HepG2 (cell line): ENCODE measurements at regions of chr11 and their contacts with region 1.

Region 1: DNA sequence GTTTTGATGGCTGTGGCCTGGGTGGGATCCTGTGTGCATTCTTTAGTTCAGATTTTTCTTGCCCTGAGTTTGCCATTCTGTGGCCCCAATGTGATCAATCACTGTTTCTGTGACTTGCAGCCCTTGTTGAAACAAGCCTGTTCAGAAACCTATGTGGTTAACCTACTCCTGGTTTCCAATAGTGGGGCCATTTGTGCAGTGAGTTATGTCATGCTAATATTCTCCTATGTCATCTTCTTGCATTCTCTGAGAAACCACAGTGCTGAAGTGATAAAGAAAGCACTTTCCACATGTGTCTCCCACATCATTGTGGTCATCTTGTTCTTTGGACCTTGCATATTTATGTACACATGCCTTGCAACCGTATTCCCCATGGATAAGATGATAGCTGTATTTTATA is 620 bp downstream of the OR4C16 start:
- DNase-seq: no peak
- ATAC-seq: no peak
- H3K4me3 ChIP-seq: no peak overlapping the region
- H3K27ac ChIP-seq: no peak overlapping the region
- H3K4me1 ChIP-seq: no peaks in the 10 kb centered on the region
- H3K27me3 ChIP-seq: no peaks in the 10 kb centered on the region
- CTCF ChIP-seq: no peak
- EP300 ChIP-seq: no peak
- POLR2A ChIP-seq: no peak
- RAD21 ChIP-seq: no peak

Region 2: GRCh38 chr11:55607545-55607944 is 35.0 kb after region 1 on chr11 and contains the start of gene OR4C11:
- CTCF ChIA-PET with region 1: no interaction called
- POLR2A ChIA-PET with region 1: no interaction called
- in situ Hi-C with region 1: no loop called
- intact Hi-C with region 1: no loop called
- DNase-seq: no peak
- ATAC-seq: no peak
- H3K4me3 ChIP-seq: no peak within 1 kb of the TSS
- H3K27ac ChIP-seq: no peak within 1 kb of the TSS
- H3K4me1 ChIP-seq: no peaks in the 10 kb centered on the region
- H3K27me3 ChIP-seq: no peaks in the 10 kb centered on the region
- CTCF ChIP-seq: no peak
- EP300 ChIP-seq: no peak
- POLR2A ChIP-seq: no peak
- RAD21 ChIP-seq: no peak
- total RNA-seq, gene OR4C11: not detected in 2 replicates

Region 3: DNA sequence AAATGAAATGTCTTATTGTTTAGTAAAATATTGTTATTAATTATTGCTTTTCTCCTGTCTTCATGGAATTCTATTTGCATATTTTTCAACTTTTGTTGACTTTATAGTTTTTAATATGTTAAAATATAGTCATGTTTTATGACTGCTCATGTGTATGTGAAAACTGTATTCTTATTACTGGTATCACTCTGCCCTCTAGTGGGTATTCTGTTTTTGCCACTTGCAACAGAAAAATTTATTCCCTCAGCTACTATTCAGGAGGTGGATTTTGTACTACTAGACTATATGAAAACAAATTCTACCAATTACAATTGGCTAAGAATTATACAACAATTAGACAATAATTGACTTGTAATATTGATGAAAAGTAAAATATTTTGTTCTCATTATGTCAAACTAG is 134.5 kb after region 1 on chr11:
- CTCF ChIA-PET with region 1: no interaction called
- POLR2A ChIA-PET with region 1: no interaction called
- in situ Hi-C with region 1: loop called (anchors 25 kb)
- intact Hi-C with region 1: no loop called
- DNase-seq: peak; percentile 25
- ATAC-seq: no peak
- H3K4me3 ChIP-seq: no peak overlapping the region
- H3K27ac ChIP-seq: no peak overlapping the region
- H3K4me1 ChIP-seq: no peaks in the 10 kb centered on the region
- H3K27me3 ChIP-seq: no peaks in the 10 kb centered on the region; a peak in 1 of 5 replicates
- CTCF ChIP-seq: peak; percentile 51
- EP300 ChIP-seq: no peak
- POLR2A ChIP-seq: no peak
- RAD21 ChIP-seq: no peak